ENCODE measurements at regions of chr12 and their contacts with region 1.

Region 1: GRCh38 chr12:22856178-22856577 is 231.2 kb downstream of the ETNK1 start:
- DNase-seq: no peak
- ATAC-seq: no peak
- H3K4me3 ChIP-seq: no peak overlapping the region
- H3K27ac ChIP-seq: no peak overlapping the region
- H3K4me1 ChIP-seq: no peaks in the 10 kb centered on the region
- H3K27me3 ChIP-seq: no peaks in the 10 kb centered on the region

Region 2: GRCh38 chr12:22712083-22712482 is 144.1 kb before region 1 on chr12:
- intact Hi-C with region 1: loop called in 1 of 2 experiments (anchors 10 kb)
- DNase-seq: no peak
- ATAC-seq: no peak
- H3K4me3 ChIP-seq: no peak overlapping the region
- H3K27ac ChIP-seq: no peak overlapping the region
- H3K4me1 ChIP-seq: peaks cover 0 to 2% of the 10 kb centered on the region in 2 donors
- H3K27me3 ChIP-seq: no peaks in the 10 kb centered on the region

Region 3: GRCh38 chr12:22828073-22828472 is 28.1 kb before region 1 on chr12:
- intact Hi-C with region 1: no loop called
- DNase-seq: no peak
- ATAC-seq: no peak
- H3K4me3 ChIP-seq: no peak overlapping the region
- H3K27ac ChIP-seq: no peak overlapping the region
- H3K4me1 ChIP-seq: no peaks in the 10 kb centered on the region
- H3K27me3 ChIP-seq: no peaks in the 10 kb centered on the region

Region 4: DNA sequence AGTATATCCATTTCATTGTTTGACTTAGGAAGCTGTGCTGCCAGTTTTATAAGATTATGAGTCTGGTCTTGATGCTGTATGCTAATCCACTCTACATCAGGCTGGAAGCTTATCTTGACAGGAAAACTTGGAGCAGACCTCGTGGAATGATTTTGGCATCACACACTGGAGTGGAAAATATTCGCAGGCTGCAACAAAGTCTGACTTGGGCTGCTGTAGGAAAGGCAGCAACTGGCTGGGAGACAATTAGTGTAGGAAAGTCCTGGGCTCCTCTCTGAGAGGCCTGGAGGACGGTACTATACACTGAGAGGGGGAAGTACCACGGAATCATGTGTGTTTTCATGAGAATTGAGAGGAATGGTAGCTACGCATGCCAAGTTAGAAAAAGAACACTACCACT is 152.4 kb after region 1 on chr12:
- intact Hi-C with region 1: loop called in 1 of 2 experiments (anchors 10 kb)
- DNase-seq: peak in 1 of 2 donors; percentile 51
- ATAC-seq: peak; percentile 72
- H3K4me3 ChIP-seq: no peak overlapping the region
- H3K27ac ChIP-seq: peak overlapping the region; percentile 51 to 79
- H3K4me1 ChIP-seq: peaks cover 1 to 3% of the 10 kb centered on the region in 2 donors
- H3K27me3 ChIP-seq: no peaks in the 10 kb centered on the region

Region 5: DNA sequence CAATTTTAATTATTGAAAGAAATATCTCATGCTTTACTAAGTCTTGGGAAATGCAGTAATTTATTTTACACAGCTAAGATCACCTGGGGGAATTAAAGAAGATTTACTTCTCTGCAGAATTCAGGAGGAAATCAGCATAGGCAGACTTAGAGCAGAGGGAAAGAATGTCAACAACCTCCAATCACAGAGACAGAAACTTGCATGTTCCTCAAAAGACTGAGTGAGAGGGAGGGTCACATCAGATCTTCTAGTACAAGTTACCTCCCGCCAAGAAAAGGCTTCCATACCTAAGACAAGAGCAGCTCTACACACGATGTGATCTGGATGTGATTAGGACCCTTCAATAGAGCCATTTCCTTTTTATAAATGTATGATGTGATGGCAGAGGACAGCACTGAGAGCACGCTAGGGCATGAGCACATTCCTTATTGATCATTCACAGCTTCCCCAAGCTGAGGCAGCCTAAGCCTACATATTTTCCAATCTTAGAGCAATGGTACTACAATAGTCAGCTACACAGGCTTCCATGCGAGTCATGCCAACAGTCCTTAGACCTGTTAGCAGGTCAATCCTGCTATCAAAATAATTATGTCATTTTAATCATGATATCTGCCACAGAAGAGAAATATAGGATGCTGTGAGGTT is 172.1 kb after region 1 on chr12:
- intact Hi-C with region 1: no loop called
- DNase-seq: no peak
- ATAC-seq: no peak
- H3K4me3 ChIP-seq: no peak overlapping the region
- H3K27ac ChIP-seq: no peak overlapping the region
- H3K4me1 ChIP-seq: peaks cover 0 to 3% of the 10 kb centered on the region in 2 donors
- H3K27me3 ChIP-seq: no peaks in the 10 kb centered on the region

Region 6: GRCh38 chr12:23055004-23055403 is 198.8 kb after region 1 on chr12:
- intact Hi-C with region 1: loop called in 1 of 2 experiments (anchors 2 kb)
- DNase-seq: no peak
- ATAC-seq: no peak
- H3K4me3 ChIP-seq: no peak overlapping the region
- H3K27ac ChIP-seq: no peak overlapping the region
- H3K4me1 ChIP-seq: no peaks in the 10 kb centered on the region
- H3K27me3 ChIP-seq: no peaks in the 10 kb centered on the region

Region 7: GRCh38 chr12:23197266-23197665 is 341.1 kb after region 1 on chr12:
- intact Hi-C with region 1: loop called in 1 of 2 experiments (anchors 10 kb)
- DNase-seq: no peak
- ATAC-seq: peak; percentile 84
- H3K4me3 ChIP-seq: peak overlapping the region in 1 of 2 donors; percentile 10
- H3K27ac ChIP-seq: peak overlapping the region in 1 of 2 donors; percentile 67
- H3K4me1 ChIP-seq: peaks cover 2 to 3% of the 10 kb centered on the region in 2 donors
- H3K27me3 ChIP-seq: no peaks in the 10 kb centered on the region

Region 8: DNA sequence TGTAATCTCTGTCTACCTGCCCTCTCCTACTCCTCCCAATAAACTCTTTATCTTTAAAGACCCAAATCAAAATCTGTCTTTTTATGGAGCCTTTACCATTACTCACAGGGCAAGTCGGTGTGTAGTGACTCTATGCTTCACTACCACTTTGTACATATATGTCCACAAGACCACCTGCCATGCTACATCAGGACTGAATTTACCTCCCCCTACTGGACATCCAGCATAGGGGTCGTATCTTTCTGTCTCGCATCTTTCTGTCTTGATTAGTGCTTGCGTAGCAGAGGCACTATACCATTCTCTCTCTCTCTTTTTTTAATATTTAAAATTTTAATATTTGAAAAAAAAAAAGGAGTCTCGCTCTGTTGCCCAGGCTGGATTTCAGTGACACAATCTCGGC is 505.8 kb after region 1 on chr12:
- intact Hi-C with region 1: loop called in 1 of 2 experiments (anchors 10 kb)
- DNase-seq: no peak
- ATAC-seq: no peak
- H3K4me3 ChIP-seq: no peak overlapping the region
- H3K27ac ChIP-seq: peak overlapping the region; percentile 36 to 52
- H3K4me1 ChIP-seq: peaks cover 0 to 3% of the 10 kb centered on the region in 2 donors
- H3K27me3 ChIP-seq: no peaks in the 10 kb centered on the region